Naive thymus-derived CD4-positive, alpha-beta T cell (primary cell): ENCODE measurements at regions of chr12 and their contacts with region 1.

Region 1: DNA sequence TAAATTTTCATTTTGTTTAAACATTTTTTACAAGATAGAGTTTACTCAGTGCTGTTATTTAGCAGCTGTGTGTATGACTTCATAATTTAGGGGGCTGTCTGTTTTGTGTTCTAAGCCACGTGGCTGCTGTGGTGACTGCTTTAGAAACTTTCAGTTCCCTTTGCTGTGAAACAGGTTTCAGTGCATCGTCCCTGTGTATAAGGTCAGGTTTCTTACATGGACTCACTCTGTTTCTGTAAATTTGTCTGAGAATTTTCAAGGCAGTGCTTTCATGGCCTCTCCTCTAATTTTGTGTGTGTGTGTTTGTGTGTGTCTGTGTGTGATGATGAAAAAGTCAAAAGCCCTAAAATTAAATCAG is 32.4 kb downstream of the BICD1 start:
- DNase-seq: peak in 7 of 9 donors; percentile 12 to 45 (median 26)
- ATAC-seq: peak; percentile 74
- H3K4me3 ChIP-seq: peak overlapping the region; percentile 45
- H3K4me3 Mint-ChIP-seq: peak overlapping the region; percentile 71 to 94 (median 88)
- H3K27ac ChIP-seq: peak overlapping the region; percentile 59
- H3K27ac Mint-ChIP-seq: peak overlapping the region; percentile 56 to 88 (median 83)
- H3K4me1 ChIP-seq: peaks cover 0 to 7% of the 10 kb centered on the region in 2 donors
- H3K4me1 Mint-ChIP-seq: peaks cover 9 to 44% (median 39%) of the 10 kb centered on the region in 7 donors
- H3K27me3 ChIP-seq: no peaks in the 10 kb centered on the region
- H3K27me3 Mint-ChIP-seq: peaks cover 0 to 8% (median 0%) of the 10 kb centered on the region in 5 donors

Region 2: DNA sequence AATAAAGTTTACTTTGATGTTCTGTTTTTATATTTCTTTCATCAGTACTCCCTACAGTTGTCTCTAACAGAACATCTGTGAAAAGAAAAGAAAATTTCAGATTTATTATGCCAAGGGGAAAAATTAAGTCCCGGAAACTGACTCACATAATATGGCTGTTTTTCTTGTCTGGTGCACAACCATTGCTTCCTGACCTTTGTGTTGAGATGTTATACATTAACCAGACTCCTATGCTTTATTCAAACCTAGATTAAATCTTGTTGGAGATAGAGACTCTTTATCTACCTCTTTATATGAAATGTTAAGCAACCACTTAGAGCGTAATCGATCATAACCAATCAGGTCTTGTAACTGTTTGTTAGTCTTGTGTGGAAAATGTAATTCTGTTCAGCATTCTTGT is 70.0 kb before region 1 on chr12:
- CTCF ChIA-PET with region 1: no interaction called
- POLR2A ChIA-PET with region 1: no interaction called
- intact Hi-C with region 1: loop called in 1 of 2 experiments (anchors 10 kb)
- DNase-seq: no peak
- ATAC-seq: no peak
- H3K4me3 ChIP-seq: no peak overlapping the region
- H3K4me3 Mint-ChIP-seq: no peak overlapping the region
- H3K27ac ChIP-seq: no peak overlapping the region
- H3K27ac Mint-ChIP-seq: no peak overlapping the region
- H3K4me1 ChIP-seq: no peaks in the 10 kb centered on the region
- H3K4me1 Mint-ChIP-seq: peaks cover 0 to 7% (median 0%) of the 10 kb centered on the region in 7 donors
- H3K27me3 ChIP-seq: no peaks in the 10 kb centered on the region
- H3K27me3 Mint-ChIP-seq: peaks cover 0 to 8% (median 0%) of the 10 kb centered on the region in 5 donors

Region 3: GRCh38 chr12:32106517-32107358 is 32.3 kb before region 1 on chr12 and contains the start of gene BICD1:
- CTCF ChIA-PET with region 1: no interaction called
- POLR2A ChIA-PET with region 1: interaction called, 5 read pairs
- intact Hi-C with region 1: loop called (anchors 1 to 2 kb)
- DNase-seq: peak; percentile 43 to 84 (median 65)
- ATAC-seq: peak; percentile 90
- H3K4me3 ChIP-seq: peak within 1 kb of the TSS; percentile 90
- H3K4me3 Mint-ChIP-seq: peak within 1 kb of the TSS; percentile 82 to 98 (median 96)
- H3K27ac ChIP-seq: peak within 1 kb of the TSS; percentile 67
- H3K27ac Mint-ChIP-seq: peak within 1 kb of the TSS; percentile 77 to 94 (median 91)
- H3K4me1 ChIP-seq: peaks cover 19 to 22% of the 10 kb centered on the region in 2 donors
- H3K4me1 Mint-ChIP-seq: peaks cover 11 to 42% (median 33%) of the 10 kb centered on the region in 7 donors
- H3K27me3 ChIP-seq: no peaks in the 10 kb centered on the region
- H3K27me3 Mint-ChIP-seq: peaks cover 0 to 13% (median 0%) of the 10 kb centered on the region in 5 donors
- total RNA-seq, gene BICD1: 16.7 to 25.1 (median 18.5) TPM

Region 4: DNA sequence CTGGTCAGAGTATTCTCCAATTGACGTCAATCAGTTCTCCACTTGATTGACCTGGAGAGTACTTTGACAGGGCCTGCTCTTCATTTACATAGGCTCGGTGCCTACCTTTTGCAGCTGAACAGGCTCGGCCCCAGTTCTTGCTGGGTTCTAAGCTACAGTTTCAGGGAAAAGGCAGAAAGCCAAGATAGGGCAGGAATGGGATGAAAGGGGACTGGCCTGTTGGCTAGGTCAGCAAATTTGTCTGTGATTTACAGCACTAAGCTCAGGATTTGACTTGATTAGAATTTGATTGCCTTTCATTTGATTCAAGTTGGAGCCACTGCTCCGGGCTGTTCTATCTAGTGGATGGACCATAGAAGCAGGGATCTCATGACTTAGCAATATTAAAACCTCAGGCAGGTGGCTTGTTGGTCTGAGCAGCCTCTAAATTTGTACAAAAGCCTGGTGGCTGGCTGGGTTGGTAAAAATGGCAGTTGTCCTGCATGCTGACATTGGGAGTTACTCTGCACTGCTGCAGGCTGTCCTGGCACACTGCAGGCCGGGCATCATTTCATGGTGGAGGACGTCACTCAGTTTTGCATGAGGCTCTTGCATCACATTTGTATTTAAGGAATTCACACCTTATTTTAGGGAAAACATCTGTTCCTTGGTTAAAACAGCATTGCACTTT is 39.4 kb after region 1 on chr12:
- CTCF ChIA-PET with region 1: no interaction called
- POLR2A ChIA-PET with region 1: interaction called, 3 read pairs
- intact Hi-C with region 1: loop called in 1 of 2 experiments (anchors 5 kb)
- DNase-seq: no peak
- ATAC-seq: no peak
- H3K4me3 ChIP-seq: no peak overlapping the region
- H3K4me3 Mint-ChIP-seq: no peak overlapping the region
- H3K27ac ChIP-seq: no peak overlapping the region
- H3K27ac Mint-ChIP-seq: no peak overlapping the region
- H3K4me1 ChIP-seq: no peaks in the 10 kb centered on the region
- H3K4me1 Mint-ChIP-seq: peaks cover 0 to 14% (median 0%) of the 10 kb centered on the region in 7 donors
- H3K27me3 ChIP-seq: no peaks in the 10 kb centered on the region
- H3K27me3 Mint-ChIP-seq: no peaks in the 10 kb centered on the region

Region 5: GRCh38 chr12:32605034-32605719 is 466.1 kb after region 1 on chr12:
- CTCF ChIA-PET with region 1: no interaction called
- POLR2A ChIA-PET with region 1: no interaction called
- intact Hi-C with region 1: no loop called
- DNase-seq: no peak
- ATAC-seq: no peak
- H3K4me3 ChIP-seq: no peak overlapping the region
- H3K4me3 Mint-ChIP-seq: peak overlapping the region in 1 of 10 donors; percentile 1
- H3K27ac ChIP-seq: no peak overlapping the region
- H3K27ac Mint-ChIP-seq: peak overlapping the region in 1 of 9 donors; percentile 29
- H3K4me1 ChIP-seq: no peaks in the 10 kb centered on the region
- H3K4me1 Mint-ChIP-seq: peaks cover 0 to 27% (median 0%) of the 10 kb centered on the region in 7 donors
- H3K27me3 ChIP-seq: no peaks in the 10 kb centered on the region
- H3K27me3 Mint-ChIP-seq: peaks cover 0 to 6% (median 3%) of the 10 kb centered on the region in 5 donors

Region 6: DNA sequence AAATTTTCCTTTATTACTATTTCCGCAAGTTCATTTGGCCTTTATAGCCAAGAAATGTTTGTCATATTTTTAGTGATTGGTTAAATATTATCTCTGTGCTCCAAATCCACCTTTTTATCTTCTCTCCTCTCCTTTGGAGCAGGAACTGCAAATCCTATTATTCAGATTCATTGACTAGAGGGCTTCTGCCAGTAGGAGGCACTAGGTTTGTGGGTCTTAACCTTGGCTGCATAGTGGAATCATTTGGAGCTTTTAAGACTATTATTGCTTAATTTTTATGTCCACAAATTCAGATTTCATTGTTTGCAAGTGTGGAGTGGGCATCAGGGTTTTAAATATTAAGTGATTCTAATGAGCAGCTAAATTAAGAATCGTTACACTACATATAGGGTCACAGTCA is 1375.8 kb after region 1 on chr12:
- CTCF ChIA-PET with region 1: no interaction called
- POLR2A ChIA-PET with region 1: no interaction called
- intact Hi-C with region 1: no loop called
- DNase-seq: no peak
- ATAC-seq: no peak
- H3K4me3 ChIP-seq: no peak overlapping the region
- H3K4me3 Mint-ChIP-seq: no peak overlapping the region
- H3K27ac ChIP-seq: no peak overlapping the region
- H3K27ac Mint-ChIP-seq: no peak overlapping the region
- H3K4me1 ChIP-seq: no peaks in the 10 kb centered on the region
- H3K4me1 Mint-ChIP-seq: peaks cover 0 to 1% (median 0%) of the 10 kb centered on the region in 7 donors
- H3K27me3 ChIP-seq: no peaks in the 10 kb centered on the region
- H3K27me3 Mint-ChIP-seq: no peaks in the 10 kb centered on the region